Activated naive CD4-positive, alpha-beta T cell treated with anti-CD3 and anti-CD28 coated beads for 36 hours (primary cell): ENCODE measurements at regions of chr12 and their contacts with region 1.

Region 1: GRCh38 chr12:45728630-45729232 is 775 bp upstream of the ARID2 start:
- DNase-seq: peak; percentile 96
- H3K4me3 Mint-ChIP-seq: peak overlapping the region; percentile 95
- H3K27ac Mint-ChIP-seq: peak overlapping the region; percentile 99
- H3K4me1 Mint-ChIP-seq: peaks cover 19% of the 10 kb centered on the region
- H3K27me3 Mint-ChIP-seq: no peaks in the 10 kb centered on the region

Region 2: GRCh38 chr12:44847888-44848702 is 880.6 kb before region 1 on chr12:
- CTCF ChIA-PET with region 1: no interaction called
- intact Hi-C with region 1: loop called (anchors 5 kb)
- DNase-seq: peak; percentile 79
- H3K4me3 Mint-ChIP-seq: peak overlapping the region; percentile 55
- H3K27ac Mint-ChIP-seq: peak overlapping the region; percentile 94
- H3K4me1 Mint-ChIP-seq: peaks cover 72% of the 10 kb centered on the region
- H3K27me3 Mint-ChIP-seq: no peaks in the 10 kb centered on the region

Region 3: DNA sequence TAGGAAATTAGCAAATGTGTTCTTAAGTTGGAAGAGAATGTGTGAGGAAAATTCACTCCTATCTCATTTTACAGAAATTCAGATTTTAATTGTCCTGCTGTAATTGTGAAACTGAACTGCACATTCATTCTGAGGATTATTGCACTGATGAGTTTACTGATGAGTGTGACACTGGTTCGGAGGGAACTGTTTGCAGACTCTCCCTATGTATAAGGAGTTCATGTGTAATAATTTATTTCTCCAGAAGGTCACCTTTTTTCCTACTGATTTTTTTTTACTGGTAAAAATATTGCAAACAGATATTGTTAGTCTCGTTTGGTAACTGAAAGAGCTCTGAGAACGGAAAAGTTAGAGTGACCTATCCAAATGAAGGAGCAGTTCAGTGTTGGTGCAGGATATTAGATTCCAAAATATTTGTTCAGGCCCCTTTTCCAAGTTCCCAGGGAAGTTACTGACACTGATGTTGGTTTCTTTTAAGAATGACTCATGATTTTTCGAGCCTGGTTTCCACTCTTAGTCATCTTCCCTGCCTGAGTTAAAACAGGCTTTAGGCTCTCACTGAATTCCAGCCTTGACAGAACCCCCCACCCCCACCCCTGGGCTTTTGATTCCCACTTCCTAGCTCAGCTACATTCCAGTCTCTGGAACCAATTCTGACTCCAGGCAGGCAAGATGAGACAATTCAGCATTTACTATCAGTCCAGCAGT is 494.4 kb before region 1 on chr12:
- CTCF ChIA-PET with region 1: no interaction called
- intact Hi-C with region 1: loop called (anchors 2 kb)
- DNase-seq: no peak
- H3K4me3 Mint-ChIP-seq: peak overlapping the region; percentile 35
- H3K27ac Mint-ChIP-seq: peak overlapping the region; percentile 83
- H3K4me1 Mint-ChIP-seq: peaks cover 65% of the 10 kb centered on the region
- H3K27me3 Mint-ChIP-seq: no peaks in the 10 kb centered on the region

Region 4: GRCh38 chr12:45670346-45671065 is 58.2 kb before region 1 on chr12:
- CTCF ChIA-PET with region 1: interaction called, 7 read pairs
- intact Hi-C with region 1: loop called (anchors 1 kb)
- DNase-seq: no peak
- H3K4me3 Mint-ChIP-seq: no peak overlapping the region
- H3K27ac Mint-ChIP-seq: no peak overlapping the region
- H3K4me1 Mint-ChIP-seq: peaks cover 30% of the 10 kb centered on the region
- H3K27me3 Mint-ChIP-seq: peaks cover 7% of the 10 kb centered on the region

Region 5: GRCh38 chr12:46372544-46373110 is 643.9 kb after region 1 on chr12 and contains the start of gene SLC38A2:
- CTCF ChIA-PET with region 1: no interaction called
- intact Hi-C with region 1: loop called (anchors 1 kb)
- DNase-seq: peak; percentile 97
- H3K4me3 Mint-ChIP-seq: peak within 1 kb of the TSS; percentile 96
- H3K27ac Mint-ChIP-seq: peak within 1 kb of the TSS; percentile 98
- H3K4me1 Mint-ChIP-seq: peaks cover 51% of the 10 kb centered on the region
- H3K27me3 Mint-ChIP-seq: no peaks in the 10 kb centered on the region
- total RNA-seq, gene SLC38A2: 196 to 206 TPM

Region 6: DNA sequence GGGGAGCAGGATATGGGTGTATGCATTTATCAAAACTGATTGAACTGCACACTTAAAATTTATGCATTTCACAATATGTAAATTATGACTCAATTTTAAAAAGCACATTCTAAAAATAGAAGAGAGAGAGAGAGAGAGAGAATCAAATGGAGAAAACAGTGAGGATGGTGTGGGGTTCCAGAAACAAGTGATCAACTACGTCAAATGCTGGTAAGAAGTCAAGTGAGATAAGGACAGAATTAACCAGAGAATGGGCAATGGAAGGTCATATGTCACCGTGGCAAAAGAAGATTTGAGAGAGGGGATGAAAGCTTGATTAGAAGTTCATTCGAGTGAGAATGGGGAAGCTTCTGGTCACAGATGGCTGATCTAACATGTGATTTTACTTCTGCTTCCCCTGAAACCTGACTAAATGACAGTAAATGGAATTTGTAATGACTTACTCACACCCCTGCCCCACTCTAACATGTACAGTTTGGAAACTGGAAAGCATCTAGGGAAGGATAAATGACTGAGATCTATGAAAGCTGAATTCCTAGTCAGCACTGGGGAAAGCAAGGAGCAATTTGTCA is 1627.5 kb after region 1 on chr12:
- CTCF ChIA-PET with region 1: no interaction called
- intact Hi-C with region 1: loop called (anchors 10 kb)
- DNase-seq: peak; percentile 72
- H3K4me3 Mint-ChIP-seq: peak overlapping the region; percentile 64
- H3K27ac Mint-ChIP-seq: peak overlapping the region; percentile 100
- H3K4me1 Mint-ChIP-seq: peaks cover 82% of the 10 kb centered on the region
- H3K27me3 Mint-ChIP-seq: no peaks in the 10 kb centered on the region